PC-9 (cell line): ENCODE measurements at regions of chr13 and their contacts with region 1.

Region 1: GRCh38 chr13:110444226-110444653 is 117.3 kb downstream of the RAB20 start:
- DNase-seq: peak; percentile 29 to 65
- H3K4me3 ChIP-seq: no peak overlapping the region
- H3K27ac ChIP-seq: no peak overlapping the region
- H3K4me1 ChIP-seq: peaks cover 77% of the 10 kb centered on the region
- H3K27me3 ChIP-seq: no peaks in the 10 kb centered on the region
- CTCF ChIP-seq: peak; percentile 45; the same call in 1 of the 2 replicates

Region 2: GRCh38 chr13:109786457-109787134 is 657.6 kb before region 1 on chr13 and contains the start of gene IRS2:
- CTCF ChIA-PET with region 1: no interaction called
- POLR2A ChIA-PET with region 1: no interaction called
- intact Hi-C with region 1: loop called (anchors 10 kb)
- DNase-seq: peak; percentile 92 to 95
- H3K4me3 ChIP-seq: peak within 1 kb of the TSS; percentile 100
- H3K27ac ChIP-seq: peak within 1 kb of the TSS; percentile 83
- H3K4me1 ChIP-seq: peaks cover 40% of the 10 kb centered on the region
- H3K27me3 ChIP-seq: no peaks in the 10 kb centered on the region
- CTCF ChIP-seq: no peak
- total RNA-seq, gene IRS2: 31.3 and 39.2 TPM in 2 replicates

Region 3: DNA sequence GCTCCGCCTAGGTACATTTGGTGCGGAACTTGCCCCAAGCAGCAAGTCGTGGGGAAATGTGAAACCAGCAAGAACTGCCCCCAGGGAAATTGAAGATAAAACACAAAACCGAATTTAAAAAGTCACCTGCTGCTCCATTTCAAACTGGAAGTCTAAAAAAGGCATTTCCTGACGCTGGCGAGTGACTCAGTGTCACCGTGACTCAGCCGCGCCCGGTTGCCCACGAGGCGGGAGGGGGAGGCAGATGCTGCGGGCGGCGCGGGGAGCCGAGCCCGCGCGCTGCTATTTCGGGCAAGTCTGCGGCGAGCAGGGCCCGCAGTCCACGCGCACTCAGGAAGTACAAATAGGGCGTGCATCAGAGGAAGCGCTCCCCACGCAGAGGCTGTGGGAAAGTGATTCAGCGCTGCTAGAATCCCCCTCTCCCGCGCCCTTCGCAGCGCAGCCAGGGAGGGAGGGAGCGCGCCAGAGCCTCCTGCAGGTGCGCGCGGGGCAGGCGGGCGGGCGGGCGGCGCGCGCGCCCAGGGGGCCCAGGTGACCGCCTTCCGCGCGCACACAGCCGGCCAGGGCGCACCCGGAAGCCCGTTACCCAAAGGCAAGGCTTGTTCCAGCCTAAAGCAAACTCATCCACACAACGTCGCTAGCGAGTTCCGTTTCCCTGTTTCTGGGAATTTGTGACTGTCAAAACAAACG is 306.1 kb before region 1 on chr13:
- CTCF ChIA-PET with region 1: no interaction called
- POLR2A ChIA-PET with region 1: no interaction called
- intact Hi-C with region 1: loop called (anchors 1 kb)
- DNase-seq: peak; percentile 82 to 94
- H3K4me3 ChIP-seq: peak overlapping the region; percentile 67
- H3K27ac ChIP-seq: peak overlapping the region; percentile 95
- H3K4me1 ChIP-seq: peaks cover 42% of the 10 kb centered on the region
- H3K27me3 ChIP-seq: no peaks in the 10 kb centered on the region
- CTCF ChIP-seq: peak; percentile 42; the same call in 1 of the 2 replicates

Region 4: DNA sequence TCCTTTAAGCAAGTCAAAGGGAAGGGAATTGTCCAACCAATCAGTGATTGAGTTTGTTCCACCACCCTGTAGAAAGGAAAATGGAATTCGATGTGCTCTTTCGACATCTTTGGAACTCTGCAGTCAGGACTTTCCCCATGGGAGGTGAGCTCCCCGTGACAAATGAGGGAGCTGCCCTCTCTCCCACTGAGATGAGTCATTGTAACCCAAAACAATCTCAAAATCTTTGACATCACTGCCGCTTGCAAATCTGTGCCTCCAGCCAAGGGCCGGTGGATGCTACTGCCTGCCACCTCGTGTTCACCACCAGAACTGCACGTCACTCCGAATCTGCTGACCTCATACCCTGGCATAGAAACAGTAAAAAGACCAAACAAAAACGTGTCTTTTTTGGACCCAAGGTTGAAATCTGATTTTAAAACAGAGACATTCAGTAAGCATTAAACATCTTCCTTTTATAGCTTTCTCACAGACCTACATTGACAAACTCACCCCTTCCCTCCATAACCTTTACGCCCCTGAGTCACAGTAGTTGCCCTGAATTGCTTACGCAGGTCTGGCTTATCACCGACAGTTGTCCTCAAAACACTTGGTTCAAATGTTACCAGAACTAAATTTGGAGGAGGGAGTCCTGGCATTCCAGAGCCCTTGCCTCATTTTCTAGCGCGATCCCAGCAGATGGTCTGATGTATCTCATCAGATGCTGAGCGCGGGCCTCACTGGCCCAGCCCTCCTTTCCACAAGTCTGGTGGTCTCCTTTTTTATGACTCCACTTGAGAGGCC is 31.9 kb before region 1 on chr13:
- CTCF ChIA-PET with region 1: no interaction called
- POLR2A ChIA-PET with region 1: no interaction called
- intact Hi-C with region 1: loop called (anchors 1 kb)
- DNase-seq: peak; percentile 88 to 97
- H3K4me3 ChIP-seq: no peak overlapping the region
- H3K27ac ChIP-seq: peak overlapping the region; percentile 71
- H3K4me1 ChIP-seq: peaks cover 19% of the 10 kb centered on the region
- H3K27me3 ChIP-seq: no peaks in the 10 kb centered on the region
- CTCF ChIP-seq: peak; percentile 94

Region 5: GRCh38 chr13:110915057-110915873 is 471.0 kb after region 1 on chr13 and contains the start of gene ANKRD10:
- CTCF ChIA-PET with region 1: interaction called, 5 read pairs
- POLR2A ChIA-PET with region 1: no interaction called
- intact Hi-C with region 1: loop called (anchors 10 kb)
- DNase-seq: peak; percentile 98 to 100
- H3K4me3 ChIP-seq: peak within 1 kb of the TSS; percentile 82
- H3K27ac ChIP-seq: peak within 1 kb of the TSS; percentile 89
- H3K4me1 ChIP-seq: peaks cover 34% of the 10 kb centered on the region
- H3K27me3 ChIP-seq: no peaks in the 10 kb centered on the region
- CTCF ChIP-seq: peak; percentile 81
- total RNA-seq, gene ANKRD10: 154 and 155 TPM in 2 replicates